RWPE1 (cell line): ENCODE measurements at regions of chr4 and their contacts with region 1.

Region 1: DNA sequence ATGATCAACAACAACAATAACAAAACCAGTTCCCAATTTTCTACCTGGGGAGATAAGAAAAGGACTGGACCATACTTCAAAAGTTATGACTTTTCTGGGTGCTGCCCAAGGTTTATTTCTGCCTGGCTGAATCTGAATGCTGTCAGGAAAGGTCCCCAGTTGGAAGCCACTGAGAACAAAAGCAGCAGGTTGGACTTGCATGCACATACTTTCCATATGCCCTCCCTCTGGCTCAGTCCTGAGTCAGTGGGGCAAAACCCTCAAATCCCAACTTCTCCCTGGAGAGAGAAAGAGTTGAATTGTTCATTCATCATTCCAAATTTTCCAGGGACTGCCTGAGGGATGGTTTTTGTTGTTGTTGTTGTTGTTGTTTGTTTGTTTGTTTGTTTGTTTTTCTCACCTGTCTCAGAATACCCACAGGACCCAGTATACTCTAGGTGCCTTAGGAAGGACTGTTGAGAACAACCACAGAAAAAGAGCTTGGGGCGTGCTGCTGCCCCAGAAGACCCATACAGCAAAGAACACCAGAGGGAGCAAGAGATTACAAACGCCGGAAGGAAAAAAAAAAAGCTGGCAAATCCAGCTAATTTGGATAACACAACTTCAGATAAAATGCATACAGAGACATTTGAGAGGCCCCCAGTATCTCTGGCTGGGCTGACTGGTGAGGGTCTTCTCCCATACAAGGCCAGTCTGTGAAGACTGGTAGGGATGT is 138.9 kb upstream of the INPP4B start:
- DNase-seq: peak; percentile 20
- H3K27ac ChIP-seq: no peak overlapping the region
- CTCF ChIP-seq: peak; percentile 32; the same call in 1 of the 2 replicates

Region 2: DNA sequence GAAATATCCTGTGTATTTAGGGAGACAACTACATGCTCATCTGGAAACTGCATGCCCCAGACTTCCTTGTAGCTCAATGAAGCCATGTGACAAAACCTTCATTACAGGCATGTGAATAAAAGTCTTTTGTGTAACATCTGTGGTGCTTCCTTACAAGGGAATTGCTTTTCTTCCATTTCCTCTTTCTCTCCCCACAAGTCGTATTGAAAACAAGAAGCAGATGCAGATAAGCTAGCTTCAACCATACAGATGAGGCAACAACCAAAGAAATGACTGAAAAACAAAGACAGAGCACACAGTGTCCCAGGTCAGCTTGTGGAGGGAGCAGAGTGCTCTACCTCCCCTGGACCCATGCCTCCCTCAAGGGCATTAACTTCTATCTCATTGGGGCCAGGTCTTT is 23.2 kb before region 1 on chr4:
- CTCF ChIA-PET with region 1: no interaction called
- POLR2A ChIA-PET with region 1: no interaction called
- DNase-seq: no peak
- H3K27ac ChIP-seq: no peak overlapping the region
- CTCF ChIP-seq: no peak

Region 3: DNA sequence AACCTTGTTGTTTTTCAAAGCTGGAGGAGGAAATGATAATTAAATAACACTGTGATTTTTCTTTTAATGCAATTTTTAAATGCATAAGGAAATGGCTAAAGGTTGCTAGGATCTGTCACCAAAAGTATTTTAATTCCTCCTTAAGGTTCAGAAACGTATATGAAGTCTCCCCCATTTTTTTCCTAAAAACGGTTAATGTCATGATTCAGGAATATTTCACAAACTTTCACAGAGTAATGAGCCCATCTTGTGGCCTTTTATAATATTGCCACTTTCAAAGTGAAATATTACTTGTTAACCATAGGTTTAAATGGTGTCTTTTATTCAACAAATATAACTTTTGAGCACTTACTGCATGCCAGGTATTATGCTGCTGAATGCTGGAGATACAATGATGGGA is 100.2 kb after region 1 on chr4:
- CTCF ChIA-PET with region 1: interaction called, 13 read pairs
- POLR2A ChIA-PET with region 1: no interaction called
- DNase-seq: no peak
- H3K27ac ChIP-seq: no peak overlapping the region
- CTCF ChIP-seq: peak; percentile 19; the same call in 1 of the 2 replicates